Cardiac septum (tissue), 1 donor: ENCODE measurements at regions of chr6 and their contacts with region 1.

Region 1: GRCh38 chr6:100001915-100002388 is 7.9 kb upstream of the MCHR2 start:
- DNase-seq: no peak

Region 2: GRCh38 chr6:100479179-100480035 is 477.5 kb after region 1 on chr6:
- intact Hi-C with region 1: loop called (anchors 2 kb)
- DNase-seq: no peak

Region 3: DNA sequence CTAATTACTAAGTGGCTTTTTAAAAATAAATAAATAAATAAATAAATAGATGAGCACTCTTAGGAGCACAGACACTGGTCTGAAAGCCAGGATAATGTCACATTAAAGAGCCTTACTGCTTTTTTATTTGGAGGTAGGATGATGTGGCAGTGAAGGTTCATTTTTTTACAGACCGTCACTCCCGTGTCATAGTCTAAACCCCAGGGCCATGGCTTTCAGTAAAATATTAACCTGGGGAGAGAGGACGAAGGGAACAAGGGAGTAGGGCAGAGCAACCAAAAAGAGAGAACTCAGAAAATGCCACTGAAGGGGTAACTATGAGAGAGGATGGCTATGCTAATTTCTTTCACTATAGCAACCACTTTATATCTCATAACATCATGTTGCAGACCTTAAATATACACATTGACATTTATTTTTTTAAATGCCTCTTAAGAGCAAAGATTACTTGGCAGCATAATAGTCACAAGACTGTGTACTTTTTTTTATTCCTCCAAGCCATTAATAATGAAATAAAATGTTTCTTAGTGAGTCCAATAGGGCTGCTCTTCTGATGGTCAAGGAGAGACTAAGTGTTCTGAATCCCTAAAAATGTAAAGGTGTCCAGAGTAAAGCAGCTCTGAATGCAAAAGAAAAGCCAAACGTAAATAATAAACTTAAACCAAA is 563.6 kb after region 1 on chr6:
- intact Hi-C with region 1: no loop called
- DNase-seq: no peak